ENCODE measurements at regions of chr2 and their contacts with region 1.

Region 1: DNA sequence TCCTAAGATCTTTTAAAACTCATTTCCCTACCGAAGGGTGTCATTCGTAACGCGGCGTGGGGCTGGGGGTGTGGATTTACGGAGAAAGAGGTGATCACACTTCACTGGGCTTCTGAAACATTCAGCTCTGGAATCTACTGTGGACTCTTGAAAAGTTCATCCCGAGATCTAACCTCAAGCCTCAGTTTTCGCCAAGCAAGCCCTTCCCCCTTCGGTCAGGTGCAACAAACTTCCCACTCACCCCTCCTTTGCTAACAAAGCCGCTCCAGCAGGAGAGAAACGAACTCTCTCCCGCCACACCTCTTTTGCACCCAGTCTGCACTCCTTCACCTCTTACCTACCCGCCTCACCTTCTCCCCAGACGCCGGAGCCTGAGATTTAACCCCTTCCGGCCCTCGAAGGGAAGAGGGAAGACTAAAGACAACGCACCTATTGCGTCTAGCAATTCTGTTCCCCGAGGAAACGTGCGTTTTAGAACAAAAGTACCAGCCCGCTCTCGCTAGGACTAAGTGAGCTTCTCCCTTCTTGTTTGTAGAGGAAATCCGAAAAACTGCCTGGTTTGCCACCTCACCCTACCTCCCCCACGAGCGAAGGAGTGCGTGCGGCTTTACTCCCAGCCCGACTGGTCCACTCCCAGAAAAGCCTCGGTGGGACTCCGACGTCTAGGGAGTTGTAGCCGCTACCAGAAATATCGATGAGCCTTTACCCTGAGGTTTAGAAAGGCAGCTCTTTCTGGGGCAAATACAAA is 538 bp upstream of the PEX13 start:
- DNase-seq: peak; percentile 76 to 87 (median 79)
- ATAC-seq: peak; percentile 80
- H3K4me3 ChIP-seq: peak overlapping the region; percentile 90
- H3K27ac ChIP-seq: peak overlapping the region; percentile 99
- H3K4me1 ChIP-seq: peaks cover 0 to 4% of the 10 kb centered on the region in 2 experiments; a peak in 2 of 5 replicates
- H3K27me3 ChIP-seq: no peaks in the 10 kb centered on the region
- CTCF ChIP-seq: 0 out of 6 replicates have a peak, but pooled peaks of 1 of the 3 experiments have one; percentile 12
- EP300 ChIP-seq: no peak
- POLR2A ChIP-seq: peak; percentile 73
- RAD21 ChIP-seq: peak in 1 of 2 experiments; percentile 9; a peak in 2 of 4 replicates

Region 2: GRCh38 chr2:60424233-60424632 is 592.7 kb before region 1 on chr2:
- CTCF ChIA-PET with region 1: no interaction called
- POLR2A ChIA-PET with region 1: no interaction called
- in situ Hi-C with region 1: no loop called
- intact Hi-C with region 1: no loop called
- DNase-seq: no peak
- ATAC-seq: no peak
- H3K4me3 ChIP-seq: no peak overlapping the region
- H3K27ac ChIP-seq: no peak overlapping the region
- H3K4me1 ChIP-seq: no peaks in the 10 kb centered on the region
- H3K27me3 ChIP-seq: no peaks in the 10 kb centered on the region
- CTCF ChIP-seq: no peak
- EP300 ChIP-seq: no peak
- POLR2A ChIP-seq: no peak
- RAD21 ChIP-seq: no peak

Region 3: GRCh38 chr2:60806988-60807681 is 209.8 kb before region 1 on chr2:
- CTCF ChIA-PET with region 1: no interaction called
- POLR2A ChIA-PET with region 1: no interaction called
- in situ Hi-C with region 1: no loop called
- intact Hi-C with region 1: no loop called
- DNase-seq: peak; percentile 70 to 92 (median 79)
- ATAC-seq: peak; percentile 89
- H3K4me3 ChIP-seq: no peak overlapping the region
- H3K27ac ChIP-seq: peak overlapping the region; percentile 78
- H3K4me1 ChIP-seq: peaks cover 27 to 28% of the 10 kb centered on the region in 2 experiments
- H3K27me3 ChIP-seq: no peaks in the 10 kb centered on the region
- CTCF ChIP-seq: no peak
- EP300 ChIP-seq: peak; percentile 48
- POLR2A ChIP-seq: peak; percentile 57; the same call in 1 of the 2 replicates
- RAD21 ChIP-seq: peak in 1 of 2 experiments; percentile 2; a peak in 2 of 4 replicates

Region 4: DNA sequence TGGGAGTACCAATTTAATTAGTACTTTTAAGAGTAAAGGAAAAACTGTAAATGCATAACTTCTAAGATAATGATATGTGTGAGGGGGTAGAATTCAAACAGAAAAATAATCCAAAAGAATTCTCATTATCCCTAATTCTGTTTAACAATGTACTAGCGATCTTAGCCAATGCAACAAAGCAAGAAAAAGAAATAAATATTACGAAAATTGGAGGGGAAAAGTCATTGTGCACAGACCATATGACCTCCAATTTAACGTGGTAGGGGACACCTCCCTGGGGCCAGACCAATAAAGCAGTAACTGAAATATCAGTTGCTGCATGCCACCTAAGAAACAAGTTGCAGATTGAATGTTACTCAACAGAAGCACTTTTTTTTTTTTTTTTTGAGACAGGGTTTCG is 25.3 kb before region 1 on chr2:
- CTCF ChIA-PET with region 1: no interaction called
- POLR2A ChIA-PET with region 1: no interaction called
- in situ Hi-C with region 1: no loop called
- intact Hi-C with region 1: loop called (anchors 1 kb)
- DNase-seq: no peak
- ATAC-seq: no peak
- H3K4me3 ChIP-seq: no peak overlapping the region
- H3K27ac ChIP-seq: no peak overlapping the region
- H3K4me1 ChIP-seq: no peaks in the 10 kb centered on the region
- H3K27me3 ChIP-seq: no peaks in the 10 kb centered on the region
- CTCF ChIP-seq: no peak
- EP300 ChIP-seq: no peak
- POLR2A ChIP-seq: no peak
- RAD21 ChIP-seq: no peak

Region 5: GRCh38 chr2:61065715-61066709 is 49.0 kb after region 1 on chr2 and contains the start of gene SANBR:
- CTCF ChIA-PET with region 1: no interaction called
- POLR2A ChIA-PET with region 1: no interaction called
- in situ Hi-C with region 1: no loop called
- intact Hi-C with region 1: loop called (anchors 1 kb)
- DNase-seq: peak; percentile 90 to 97 (median 96)
- ATAC-seq: peak; percentile 99
- H3K4me3 ChIP-seq: peak within 1 kb of the TSS; percentile 75
- H3K27ac ChIP-seq: peak within 1 kb of the TSS; percentile 64
- H3K4me1 ChIP-seq: peaks cover 3 to 15% of the 10 kb centered on the region in 2 experiments; a peak in 3 of 5 replicates
- H3K27me3 ChIP-seq: no peaks in the 10 kb centered on the region
- CTCF ChIP-seq: no peak; a peak in 1 of 6 replicates
- EP300 ChIP-seq: no peak
- POLR2A ChIP-seq: 0 out of 2 replicates have a peak, but pooled peaks have one; percentile 40
- RAD21 ChIP-seq: no peak
- polyA plus RNA-seq, gene SANBR: 1.5 to 3.1 TPM

Region 6: GRCh38 chr2:61176755-61177726 is 160.1 kb after region 1 on chr2:
- CTCF ChIA-PET with region 1: no interaction called
- POLR2A ChIA-PET with region 1: no interaction called
- in situ Hi-C with region 1: no loop called
- intact Hi-C with region 1: loop called (anchors 5 kb)
- DNase-seq: peak; percentile 95 to 98 (median 98)
- ATAC-seq: peak; percentile 90
- H3K4me3 ChIP-seq: peak overlapping the region; percentile 68
- H3K27ac ChIP-seq: peak overlapping the region; percentile 88
- H3K4me1 ChIP-seq: peaks cover 30 to 46% of the 10 kb centered on the region in 2 experiments
- H3K27me3 ChIP-seq: no peaks in the 10 kb centered on the region
- CTCF ChIP-seq: peak in 2 of 3 experiments; percentile 21 to 22; a peak in 3 of 6 replicates
- EP300 ChIP-seq: peak; percentile 1; the same call in 1 of the 2 replicates
- POLR2A ChIP-seq: peak; percentile 95
- RAD21 ChIP-seq: peak in 1 of 2 experiments; percentile 28; a peak in 3 of 4 replicates

Measured in K562 (cell line).